Right ventricle myocardium inferior (tissue), 1 donor: ENCODE measurements at regions of chr15 and their contacts with region 1.

Region 1: GRCh38 chr15:41827880-41828806 is at the start of gene JMJD7:
- DNase-seq: peak; percentile 97
- ATAC-seq: peak; percentile 98
- total RNA-seq, gene JMJD7: 12.6 TPM

Region 2: DNA sequence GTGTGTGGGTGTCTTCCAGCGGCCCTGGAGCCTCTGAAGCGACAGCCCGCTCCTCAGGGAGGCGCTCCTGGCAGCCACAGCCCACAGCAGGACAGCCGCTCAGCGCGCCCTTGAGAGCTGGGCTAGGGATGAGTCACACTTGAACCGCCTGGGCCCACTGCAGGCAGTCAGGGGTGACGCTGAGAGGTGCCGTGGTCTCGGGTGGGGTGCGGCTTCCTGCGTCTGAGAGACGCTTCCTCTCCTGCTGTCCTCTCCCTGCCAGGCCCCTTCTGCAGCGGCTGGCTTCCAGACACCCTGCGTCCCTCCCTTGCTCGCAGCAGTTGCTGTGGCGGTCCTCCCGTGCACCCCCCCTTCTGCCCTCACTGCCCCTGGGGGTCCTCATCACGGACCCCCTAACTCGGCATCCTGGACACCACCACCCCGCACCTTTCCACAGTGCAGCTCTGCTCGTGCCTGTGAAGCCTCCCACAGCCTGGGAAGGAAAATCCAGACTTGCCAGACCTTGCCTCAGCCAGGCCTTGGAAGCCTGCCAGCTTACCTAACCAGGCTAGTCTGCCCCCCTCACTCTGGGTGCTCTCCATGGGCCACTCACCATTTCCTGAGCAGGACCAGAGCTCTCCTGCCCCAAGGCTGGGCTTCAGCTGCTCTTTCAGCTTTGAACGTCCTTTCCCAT is 66.8 kb after region 1 on chr15:
- intact Hi-C with region 1: loop called (anchors 2 kb)
- DNase-seq: peak; percentile 90
- ATAC-seq: peak; percentile 81

Region 3: DNA sequence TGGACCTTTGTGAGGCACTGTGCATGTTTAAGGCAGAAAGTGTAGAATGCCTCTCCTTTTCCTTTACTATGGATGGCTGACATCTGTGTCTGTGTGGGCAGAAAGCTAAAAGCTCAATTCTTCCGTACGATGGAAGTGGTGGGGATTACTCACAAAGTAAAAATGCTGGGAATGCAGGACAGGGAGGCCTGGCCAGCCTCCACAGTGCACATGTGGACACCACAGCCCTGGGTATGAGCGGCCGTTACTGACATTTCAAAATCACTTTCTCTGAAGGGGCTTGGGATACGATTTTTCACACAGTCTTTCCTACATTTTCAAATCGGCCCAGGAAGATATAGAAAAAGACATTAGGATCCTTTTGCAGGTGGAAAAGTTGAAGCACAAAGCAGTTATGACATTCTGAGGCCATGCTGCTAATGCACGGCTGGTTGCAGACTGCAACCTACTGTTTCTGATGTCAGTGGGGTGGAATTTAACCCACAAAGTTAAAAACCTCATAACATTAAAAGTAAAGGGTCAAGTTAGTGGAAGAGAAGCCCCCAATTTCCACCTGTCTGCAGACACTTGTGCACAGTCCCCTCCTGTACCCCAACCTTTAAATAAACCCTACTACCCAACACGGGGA is 116.3 kb after region 1 on chr15:
- intact Hi-C with region 1: no loop called
- DNase-seq: no peak
- ATAC-seq: peak; percentile 49

Region 4: DNA sequence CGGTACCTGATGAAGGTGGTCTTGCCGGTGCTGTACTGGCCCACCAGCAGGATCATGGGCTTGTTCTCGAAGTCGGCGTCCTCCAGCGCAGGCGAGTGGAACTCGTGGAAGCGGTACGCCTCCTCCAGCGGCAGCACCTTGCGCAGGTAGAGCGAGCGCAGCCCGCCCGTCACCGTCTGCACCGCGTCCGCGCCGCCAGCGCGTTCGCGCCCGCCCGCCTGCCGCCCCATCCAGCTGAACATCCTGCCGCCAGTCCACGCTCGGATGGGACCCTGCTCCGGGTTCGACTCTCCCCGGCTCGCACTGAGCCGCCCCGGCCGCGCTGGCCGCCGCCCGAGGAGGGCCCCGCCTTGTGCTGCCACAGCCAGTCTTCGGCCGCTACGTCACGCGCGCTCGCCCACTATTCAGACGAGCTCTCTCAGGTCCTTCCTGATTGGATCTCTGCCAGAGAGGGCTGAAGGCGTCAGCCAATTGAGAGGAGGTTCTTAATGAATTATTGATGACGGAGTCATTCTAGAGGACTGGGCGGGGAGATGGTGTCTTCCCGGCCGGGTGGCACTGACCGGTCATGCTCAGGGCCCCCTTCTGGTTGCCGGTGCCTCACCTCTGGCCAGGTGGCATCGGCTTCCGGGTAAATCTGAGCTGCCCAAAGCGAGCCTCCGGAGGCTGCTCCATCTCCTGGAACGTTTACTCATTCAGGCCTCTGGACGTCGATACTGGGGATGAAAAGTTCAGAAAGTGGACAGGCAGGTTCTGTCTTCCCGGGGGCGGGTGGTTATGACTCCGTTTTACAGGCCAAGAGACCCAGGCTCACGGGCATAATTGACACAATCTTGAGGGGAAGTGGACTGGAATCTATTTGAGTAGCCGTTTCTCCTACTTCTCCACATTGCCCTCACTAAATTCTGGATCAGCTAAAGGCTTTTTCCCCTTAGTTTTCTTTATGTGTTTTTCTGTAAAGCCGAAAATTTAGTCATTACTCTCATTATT is 144.4 kb after region 1 on chr15 and contains the start of gene EHD4:
- intact Hi-C with region 1: loop called (anchors 5 kb)
- DNase-seq: peak; percentile 100
- ATAC-seq: peak; percentile 96
- total RNA-seq, gene EHD4: 55.5 TPM

Region 5: DNA sequence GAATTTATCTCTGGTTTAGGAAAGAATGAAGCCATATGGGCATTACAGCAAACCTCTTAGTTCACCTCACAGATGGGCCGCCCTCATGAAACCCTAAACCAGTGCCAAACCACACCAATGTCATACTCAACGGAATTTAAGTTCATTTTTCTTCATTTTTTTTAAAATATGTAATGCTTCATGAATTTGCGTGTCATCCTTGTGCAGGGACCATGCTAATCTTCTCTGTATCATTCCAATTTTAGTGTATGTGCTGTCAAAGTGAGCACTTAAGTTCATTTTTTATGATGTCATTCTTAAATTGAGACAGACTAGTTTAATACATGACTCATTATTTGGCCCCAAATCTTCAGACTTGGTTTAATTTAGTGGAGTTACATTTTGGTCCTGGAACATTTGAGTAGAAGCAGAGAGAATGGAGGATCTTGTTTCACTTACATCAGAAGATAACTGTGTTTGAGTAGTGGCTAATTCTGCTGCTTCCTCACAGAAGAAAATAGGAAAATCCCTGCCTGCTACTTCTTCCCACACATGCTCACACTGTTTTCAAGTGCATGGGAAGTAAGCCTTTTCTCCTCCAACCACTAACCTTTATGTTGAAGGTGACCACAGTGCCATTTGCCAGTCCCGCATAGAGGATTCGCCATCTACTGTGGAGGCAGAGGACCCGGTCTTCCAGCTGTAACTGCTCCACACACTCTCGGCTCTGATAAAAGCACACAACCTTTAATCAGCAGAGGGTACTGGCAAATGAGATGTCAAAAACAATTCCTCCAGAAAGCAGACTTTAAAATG is 599.5 kb after region 1 on chr15:
- intact Hi-C with region 1: no loop called
- DNase-seq: no peak
- ATAC-seq: no peak